ENCODE measurements at regions of chr1 and their contacts with region 1.

Region 1: GRCh38 chr1:32200226-32201010 is at the start of gene CCDC28B:
- DNase-seq: peak in 8 of 9 experiments; percentile 32 to 81 (median 64)
- ATAC-seq: peak; percentile 49
- H3K4me3 ChIP-seq: peak within 1 kb of the TSS; percentile 69 to 70
- H3K4me3 Mint-ChIP-seq: peak within 1 kb of the TSS; percentile 85
- H3K27ac ChIP-seq: peak within 1 kb of the TSS; percentile 75 to 78
- H3K27ac Mint-ChIP-seq: peak within 1 kb of the TSS; percentile 97
- H3K4me1 ChIP-seq: peaks cover 46% of the 10 kb centered on the region
- H3K4me1 Mint-ChIP-seq: peaks cover 59% of the 10 kb centered on the region
- H3K27me3 ChIP-seq: no peaks in the 10 kb centered on the region
- H3K27me3 Mint-ChIP-seq: no peaks in the 10 kb centered on the region
- CTCF ChIP-seq: no peak
- total RNA-seq, gene CCDC28B: 3.8 to 5.2 TPM

Region 2: GRCh38 chr1:32040711-32041110 is 159.7 kb before region 1 on chr1:
- CTCF ChIA-PET with region 1: no interaction called
- POLR2A ChIA-PET with region 1: no interaction called
- intact Hi-C with region 1: no loop called
- DNase-seq: no peak
- ATAC-seq: no peak
- H3K4me3 ChIP-seq: no peak overlapping the region
- H3K4me3 Mint-ChIP-seq: no peak overlapping the region
- H3K27ac ChIP-seq: no peak overlapping the region
- H3K27ac Mint-ChIP-seq: no peak overlapping the region
- H3K4me1 ChIP-seq: no peaks in the 10 kb centered on the region
- H3K4me1 Mint-ChIP-seq: peaks cover 2% of the 10 kb centered on the region
- H3K27me3 ChIP-seq: no peaks in the 10 kb centered on the region
- H3K27me3 Mint-ChIP-seq: no peaks in the 10 kb centered on the region
- CTCF ChIP-seq: no peak

Region 3: DNA sequence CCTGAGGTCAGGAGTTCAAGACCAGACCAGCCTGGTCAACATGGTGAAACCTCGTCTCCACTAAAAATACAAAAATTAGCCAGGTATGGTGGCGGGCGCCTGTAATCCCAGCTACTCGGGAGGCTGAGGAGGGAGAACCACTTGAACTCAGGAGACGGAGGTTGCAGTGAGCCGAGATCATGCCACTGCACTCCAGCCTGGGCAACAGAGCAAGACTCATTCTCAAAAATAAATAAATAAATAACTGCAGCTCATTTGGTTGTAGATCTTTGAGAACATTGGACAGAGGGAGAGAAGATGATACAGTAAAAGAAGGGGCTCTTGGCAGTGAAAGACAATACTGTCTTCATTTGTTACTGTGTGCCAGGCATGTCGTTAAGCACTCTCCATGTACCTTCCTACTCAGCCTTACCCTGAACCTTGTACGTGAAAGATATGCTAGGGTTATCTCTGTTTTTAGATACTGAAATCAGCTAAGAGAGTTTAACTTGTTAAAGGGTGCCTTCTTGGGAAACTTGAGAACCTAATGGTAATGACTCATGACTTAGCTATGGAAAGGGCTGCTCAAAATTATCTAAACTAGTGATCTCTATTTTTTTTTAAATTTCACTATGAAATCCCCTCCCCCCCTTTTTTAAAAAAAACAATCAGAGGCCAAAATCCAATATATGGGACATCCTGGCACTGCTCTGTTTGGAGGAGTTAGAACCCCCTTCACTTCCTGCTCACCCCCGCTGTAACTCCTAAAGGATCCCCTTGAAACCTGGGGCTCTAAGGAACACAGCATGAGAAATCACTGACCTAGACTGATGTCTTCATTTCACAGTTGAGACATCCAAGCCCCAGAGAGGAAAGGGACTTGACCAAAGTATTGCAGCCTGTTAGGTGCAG is 99.4 kb before region 1 on chr1:
- CTCF ChIA-PET with region 1: no interaction called
- POLR2A ChIA-PET with region 1: no interaction called
- intact Hi-C with region 1: no loop called
- DNase-seq: no peak
- ATAC-seq: no peak
- H3K4me3 ChIP-seq: no peak overlapping the region
- H3K4me3 Mint-ChIP-seq: no peak overlapping the region
- H3K27ac ChIP-seq: no peak overlapping the region
- H3K27ac Mint-ChIP-seq: no peak overlapping the region
- H3K4me1 ChIP-seq: no peaks in the 10 kb centered on the region
- H3K4me1 Mint-ChIP-seq: peaks cover 2% of the 10 kb centered on the region
- H3K27me3 ChIP-seq: no peaks in the 10 kb centered on the region
- H3K27me3 Mint-ChIP-seq: no peaks in the 10 kb centered on the region
- CTCF ChIP-seq: no peak

Region 4: GRCh38 chr1:32273388-32274208 is 73.2 kb after region 1 on chr1:
- CTCF ChIA-PET with region 1: no interaction called
- POLR2A ChIA-PET with region 1: interaction called, 3 read pairs
- intact Hi-C with region 1: loop called in 1 of 2 experiments (anchors 2 kb)
- DNase-seq: peak; percentile 58 to 96 (median 87)
- ATAC-seq: peak; percentile 88
- H3K4me3 ChIP-seq: peak overlapping the region; percentile 23 to 53
- H3K4me3 Mint-ChIP-seq: peak overlapping the region; percentile 83
- H3K27ac ChIP-seq: peak overlapping the region; percentile 36 to 77
- H3K27ac Mint-ChIP-seq: peak overlapping the region; percentile 98
- H3K4me1 ChIP-seq: peaks cover 78% of the 10 kb centered on the region
- H3K4me1 Mint-ChIP-seq: peaks cover 67% of the 10 kb centered on the region
- H3K27me3 ChIP-seq: no peaks in the 10 kb centered on the region
- H3K27me3 Mint-ChIP-seq: no peaks in the 10 kb centered on the region
- CTCF ChIP-seq: no peak

Region 5: GRCh38 chr1:32892368-32893197 is 692.2 kb after region 1 on chr1:
- CTCF ChIA-PET with region 1: no interaction called
- POLR2A ChIA-PET with region 1: no interaction called
- intact Hi-C with region 1: no loop called
- DNase-seq: peak in 5 of 9 experiments; percentile 20 to 60 (median 44)
- ATAC-seq: peak; percentile 83
- H3K4me3 ChIP-seq: peak overlapping the region; percentile 37 to 42
- H3K4me3 Mint-ChIP-seq: peak overlapping the region; percentile 69
- H3K27ac ChIP-seq: no peak overlapping the region
- H3K27ac Mint-ChIP-seq: no peak overlapping the region
- H3K4me1 ChIP-seq: no peaks in the 10 kb centered on the region
- H3K4me1 Mint-ChIP-seq: peaks cover 7% of the 10 kb centered on the region
- H3K27me3 ChIP-seq: peaks cover 15 to 17% of the 10 kb centered on the region in 2 experiments
- H3K27me3 Mint-ChIP-seq: peaks cover 69% of the 10 kb centered on the region
- CTCF ChIP-seq: no peak

Measured in CD8-positive, alpha-beta T cell (primary cell).